ENCODE measurements at regions of chr11 and their contacts with region 1.

Region 1: DNA sequence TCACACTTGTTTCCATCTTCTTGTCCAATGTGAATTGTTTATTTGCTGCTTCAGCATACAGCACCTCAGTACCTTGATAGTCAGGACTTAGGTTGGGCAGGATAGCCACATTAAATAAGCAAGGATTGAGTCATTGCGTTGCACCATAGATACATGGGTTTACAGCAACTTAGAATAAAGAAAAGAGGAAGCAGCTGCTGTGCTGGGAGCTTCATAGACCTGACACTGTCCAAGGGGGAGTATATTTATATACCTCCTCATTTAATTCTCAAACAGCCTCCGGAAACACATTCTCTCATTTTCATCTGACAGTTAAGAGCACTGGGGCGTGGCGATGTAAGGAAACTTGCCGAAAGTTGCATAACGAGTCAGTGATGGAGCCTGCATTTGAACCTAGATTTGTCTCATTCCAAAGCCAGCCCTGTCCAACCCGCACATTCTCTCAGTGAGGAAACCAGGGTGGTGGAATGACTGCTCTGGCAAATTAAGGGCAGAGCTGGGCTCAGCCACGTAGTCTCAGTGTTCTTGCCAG is 42.2 kb downstream of the UBASH3B start:
- DNase-seq: peak in 13 of 14 experiments; percentile 28 to 76 (median 47)
- ATAC-seq: peak; percentile 80
- H3K4me3 ChIP-seq: peak overlapping the region; percentile 8
- H3K4me3 Mint-ChIP-seq: peak overlapping the region; percentile 75
- H3K27ac ChIP-seq: peak overlapping the region; percentile 77 to 80
- H3K27ac Mint-ChIP-seq: peak overlapping the region; percentile 90
- H3K4me1 ChIP-seq: peaks cover 84% of the 10 kb centered on the region
- H3K4me1 Mint-ChIP-seq: peaks cover 91% of the 10 kb centered on the region
- H3K27me3 ChIP-seq: no peaks in the 10 kb centered on the region
- H3K27me3 Mint-ChIP-seq: no peaks in the 10 kb centered on the region
- CTCF ChIP-seq: no peak

Region 2: GRCh38 chr11:122422707-122423106 is 275.0 kb before region 1 on chr11:
- CTCF ChIA-PET with region 1: no interaction called
- POLR2A ChIA-PET with region 1: no interaction called
- intact Hi-C with region 1: no loop called
- DNase-seq: no peak
- ATAC-seq: no peak
- H3K4me3 ChIP-seq: no peak overlapping the region
- H3K4me3 Mint-ChIP-seq: no peak overlapping the region
- H3K27ac ChIP-seq: no peak overlapping the region
- H3K27ac Mint-ChIP-seq: no peak overlapping the region
- H3K4me1 ChIP-seq: no peaks in the 10 kb centered on the region
- H3K4me1 Mint-ChIP-seq: no peaks in the 10 kb centered on the region
- H3K27me3 ChIP-seq: no peaks in the 10 kb centered on the region
- H3K27me3 Mint-ChIP-seq: peaks cover 9% of the 10 kb centered on the region
- CTCF ChIP-seq: no peak

Region 3: DNA sequence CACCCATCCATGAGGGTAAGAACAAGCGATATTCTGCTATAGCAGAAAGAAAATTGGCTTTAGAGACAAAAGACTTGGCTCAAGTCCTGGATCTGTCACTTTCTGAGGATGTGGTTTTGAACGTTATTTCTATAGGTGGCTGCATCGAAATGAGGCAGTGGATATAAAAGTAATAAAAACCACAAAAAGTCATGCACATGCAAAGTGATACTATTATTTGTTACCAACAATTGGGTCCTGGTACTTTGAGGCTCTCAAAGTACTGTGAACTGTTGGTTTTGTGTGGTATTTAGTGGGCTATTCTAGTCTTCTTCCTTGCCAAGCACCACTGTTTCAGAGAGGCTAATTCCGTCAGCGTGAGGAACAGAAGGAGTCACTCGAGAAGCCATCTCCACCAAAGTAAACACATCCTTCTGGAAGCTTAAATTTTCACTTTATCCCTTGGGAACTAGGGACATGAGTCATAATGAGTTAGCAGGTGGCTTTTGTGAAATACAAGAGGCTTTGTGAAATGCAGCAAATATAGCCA is 29.1 kb before region 1 on chr11:
- CTCF ChIA-PET with region 1: interaction called, 3 read pairs
- POLR2A ChIA-PET with region 1: interaction called, 91 read pairs
- intact Hi-C with region 1: no loop called
- DNase-seq: peak in 3 of 14 experiments; percentile 47 to 80 (median 47)
- ATAC-seq: peak; percentile 70
- H3K4me3 ChIP-seq: no peak overlapping the region
- H3K4me3 Mint-ChIP-seq: peak overlapping the region; percentile 80
- H3K27ac ChIP-seq: peak overlapping the region in 1 of 2 donors; percentile 59
- H3K27ac Mint-ChIP-seq: peak overlapping the region; percentile 73
- H3K4me1 ChIP-seq: peaks cover 97% of the 10 kb centered on the region
- H3K4me1 Mint-ChIP-seq: peaks cover 73% of the 10 kb centered on the region
- H3K27me3 ChIP-seq: no peaks in the 10 kb centered on the region
- H3K27me3 Mint-ChIP-seq: no peaks in the 10 kb centered on the region
- CTCF ChIP-seq: no peak

Region 4: GRCh38 chr11:122681735-122682134 is 16.0 kb before region 1 on chr11:
- CTCF ChIA-PET with region 1: interaction called, 4 read pairs
- POLR2A ChIA-PET with region 1: interaction called, 91 read pairs
- intact Hi-C with region 1: no loop called
- DNase-seq: peak in 2 of 14 experiments; percentile 36 to 43
- ATAC-seq: peak; percentile 51
- H3K4me3 ChIP-seq: no peak overlapping the region
- H3K4me3 Mint-ChIP-seq: no peak overlapping the region
- H3K27ac ChIP-seq: no peak overlapping the region
- H3K27ac Mint-ChIP-seq: no peak overlapping the region
- H3K4me1 ChIP-seq: peaks cover 38% of the 10 kb centered on the region
- H3K4me1 Mint-ChIP-seq: peaks cover 70% of the 10 kb centered on the region
- H3K27me3 ChIP-seq: no peaks in the 10 kb centered on the region
- H3K27me3 Mint-ChIP-seq: no peaks in the 10 kb centered on the region
- CTCF ChIP-seq: no peak

Region 5: DNA sequence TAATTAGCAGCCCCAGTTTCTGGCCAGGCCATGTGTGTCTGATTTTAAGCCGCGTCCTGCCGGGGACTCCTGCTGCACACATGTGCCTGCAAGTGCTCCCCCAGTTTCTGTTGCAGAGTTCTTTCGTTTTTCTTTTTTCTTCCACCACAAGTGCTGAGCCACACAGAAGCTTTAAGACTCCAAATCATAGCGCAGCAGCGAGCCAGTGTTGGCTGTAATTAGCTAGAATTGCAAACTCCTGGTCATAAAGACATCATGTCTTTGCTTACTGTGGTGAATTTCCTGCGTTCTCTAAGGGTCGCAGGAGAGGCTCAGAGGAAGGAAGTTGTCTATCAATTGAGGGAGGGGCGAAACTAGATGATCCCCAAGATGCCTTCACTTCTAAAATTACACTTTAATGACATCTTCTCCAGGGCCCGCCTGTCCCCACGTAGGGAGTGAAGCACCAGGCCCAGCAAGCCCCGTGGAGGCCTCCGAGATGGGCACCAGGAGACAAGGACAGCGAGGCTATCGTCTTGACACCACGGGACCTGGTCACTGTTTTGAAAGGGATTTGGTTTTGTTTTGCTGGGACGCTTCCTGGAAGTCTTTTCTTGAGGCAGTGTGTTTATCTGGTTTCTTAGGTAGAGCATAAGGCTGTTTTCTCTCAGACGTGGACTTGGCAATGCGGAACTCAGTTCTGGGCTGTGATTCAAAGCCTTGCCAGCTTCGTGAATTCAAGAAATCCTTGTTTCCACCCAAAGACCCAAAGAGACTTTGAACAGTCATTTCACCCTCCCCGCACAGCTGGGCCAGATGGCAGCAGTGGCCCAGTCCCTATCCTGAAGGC is 29.6 kb after region 1 on chr11:
- CTCF ChIA-PET with region 1: interaction called, 4 read pairs
- POLR2A ChIA-PET with region 1: interaction called, 46 read pairs
- intact Hi-C with region 1: no loop called
- DNase-seq: peak in 10 of 14 experiments; percentile 11 to 64 (median 41)
- ATAC-seq: peak; percentile 74
- H3K4me3 ChIP-seq: peak overlapping the region; percentile 41
- H3K4me3 Mint-ChIP-seq: peak overlapping the region; percentile 80
- H3K27ac ChIP-seq: peak overlapping the region; percentile 58 to 91
- H3K27ac Mint-ChIP-seq: peak overlapping the region; percentile 95
- H3K4me1 ChIP-seq: peaks cover 74% of the 10 kb centered on the region
- H3K4me1 Mint-ChIP-seq: peaks cover 57% of the 10 kb centered on the region
- H3K27me3 ChIP-seq: no peaks in the 10 kb centered on the region
- H3K27me3 Mint-ChIP-seq: no peaks in the 10 kb centered on the region
- CTCF ChIP-seq: no peak

Region 6: DNA sequence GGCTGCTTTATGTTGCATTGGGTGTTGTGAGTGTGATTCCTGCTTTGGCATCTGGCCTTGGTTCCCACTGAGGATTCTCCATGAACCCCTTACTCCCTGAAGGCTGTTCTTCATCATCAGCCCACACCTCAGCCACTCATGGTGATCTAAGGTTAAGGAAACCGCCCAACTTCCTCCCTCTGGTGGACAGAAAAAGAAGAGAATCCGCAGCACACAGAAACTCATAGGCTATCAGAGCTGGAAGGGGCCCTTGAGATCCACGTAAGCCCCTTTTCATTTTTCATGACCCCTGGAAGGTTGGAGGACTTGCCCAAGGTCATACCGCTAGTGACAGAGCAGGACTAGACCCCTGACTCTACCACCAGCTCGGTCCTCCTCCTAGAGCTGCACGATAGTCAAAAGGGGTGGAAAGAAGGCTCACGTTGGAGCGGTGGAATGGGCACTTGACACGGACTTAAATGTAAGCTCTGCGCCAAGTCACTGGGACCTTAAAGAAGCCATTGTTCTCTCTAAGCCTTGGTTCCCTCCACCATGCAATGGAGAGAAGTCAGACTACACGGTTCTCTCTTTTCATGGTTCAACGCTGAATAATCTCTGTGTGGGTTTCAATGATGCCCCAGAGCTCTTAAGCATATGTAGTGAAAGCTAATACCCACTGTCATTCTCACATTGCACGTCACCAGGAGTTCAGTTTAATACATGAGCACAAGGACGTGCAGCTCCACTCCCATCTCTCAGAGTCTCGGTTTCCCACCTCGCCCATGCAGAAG is 57.0 kb after region 1 on chr11:
- CTCF ChIA-PET with region 1: interaction called, 6 read pairs
- POLR2A ChIA-PET with region 1: interaction called, 16 read pairs
- intact Hi-C with region 1: loop called (anchors 2 to 5 kb)
- DNase-seq: peak in 13 of 14 experiments; percentile 14 to 75 (median 27)
- ATAC-seq: peak; percentile 64
- H3K4me3 ChIP-seq: no peak overlapping the region
- H3K4me3 Mint-ChIP-seq: no peak overlapping the region
- H3K27ac ChIP-seq: no peak overlapping the region
- H3K27ac Mint-ChIP-seq: peak overlapping the region; percentile 5
- H3K4me1 ChIP-seq: peaks cover 39% of the 10 kb centered on the region
- H3K4me1 Mint-ChIP-seq: peaks cover 67% of the 10 kb centered on the region
- H3K27me3 ChIP-seq: no peaks in the 10 kb centered on the region
- H3K27me3 Mint-ChIP-seq: no peaks in the 10 kb centered on the region
- CTCF ChIP-seq: peak; percentile 69

Measured in CD4-positive, alpha-beta T cell (primary cell).